PC-3 (cell line): ENCODE measurements at regions of chr14 and their contacts with region 1.

Region 1: GRCh38 chr14:65412032-65412846 is at the start of gene FUT8:
- DNase-seq: peak; percentile 98
- ATAC-seq: peak; percentile 82
- H3K4me3 ChIP-seq: peak within 1 kb of the TSS; percentile 86
- H3K27ac ChIP-seq: peak within 1 kb of the TSS; percentile 86
- H3K4me1 ChIP-seq: peaks cover 25% of the 10 kb centered on the region
- H3K27me3 ChIP-seq: no peaks in the 10 kb centered on the region
- CTCF ChIP-seq: peak; percentile 72
- total RNA-seq, gene FUT8: 129 and 132 TPM in 2 replicates

Region 2: GRCh38 chr14:65170768-65171507 is 241.3 kb before region 1 on chr14:
- CTCF ChIA-PET with region 1: interaction called, 6 read pairs
- POLR2A ChIA-PET with region 1: interaction called, 13 read pairs
- intact Hi-C with region 1: no loop called
- DNase-seq: peak; percentile 80
- ATAC-seq: peak; percentile 86
- H3K4me3 ChIP-seq: peak overlapping the region; percentile 65
- H3K27ac ChIP-seq: peak overlapping the region; percentile 56
- H3K4me1 ChIP-seq: peaks cover 18% of the 10 kb centered on the region
- H3K27me3 ChIP-seq: no peaks in the 10 kb centered on the region
- CTCF ChIP-seq: peak; percentile 76

Region 3: GRCh38 chr14:65302571-65303189 is 109.6 kb before region 1 on chr14:
- CTCF ChIA-PET with region 1: interaction called, 11 read pairs
- POLR2A ChIA-PET with region 1: interaction called, 15 read pairs
- intact Hi-C with region 1: loop called (anchors 1 kb)
- DNase-seq: peak; percentile 80
- ATAC-seq: peak; percentile 31
- H3K4me3 ChIP-seq: peak overlapping the region; percentile 18; the same call in 1 of the 2 replicates
- H3K27ac ChIP-seq: peak overlapping the region; percentile 94
- H3K4me1 ChIP-seq: peaks cover 58% of the 10 kb centered on the region
- H3K27me3 ChIP-seq: no peaks in the 10 kb centered on the region
- CTCF ChIP-seq: no peak

Region 4: GRCh38 chr14:65401763-65402162 is 10.5 kb before region 1 on chr14:
- CTCF ChIA-PET with region 1: interaction called, 10 read pairs
- POLR2A ChIA-PET with region 1: interaction called, 3 read pairs
- intact Hi-C with region 1: no loop called
- DNase-seq: no peak
- ATAC-seq: no peak
- H3K4me3 ChIP-seq: no peak overlapping the region
- H3K27ac ChIP-seq: no peak overlapping the region
- H3K4me1 ChIP-seq: peaks cover 5% of the 10 kb centered on the region
- H3K27me3 ChIP-seq: no peaks in the 10 kb centered on the region
- CTCF ChIP-seq: no peak

Region 5: GRCh38 chr14:65676361-65676998 is 264.2 kb after region 1 on chr14:
- CTCF ChIA-PET with region 1: no interaction called
- POLR2A ChIA-PET with region 1: no interaction called
- intact Hi-C with region 1: loop called (anchors 5 kb)
- DNase-seq: peak; percentile 41
- ATAC-seq: peak; percentile 80
- H3K4me3 ChIP-seq: peak overlapping the region; percentile 44
- H3K27ac ChIP-seq: peak overlapping the region; percentile 16; the same call in 1 of the 2 replicates
- H3K4me1 ChIP-seq: peaks cover 14% of the 10 kb centered on the region
- H3K27me3 ChIP-seq: no peaks in the 10 kb centered on the region
- CTCF ChIP-seq: no peak

Region 6: DNA sequence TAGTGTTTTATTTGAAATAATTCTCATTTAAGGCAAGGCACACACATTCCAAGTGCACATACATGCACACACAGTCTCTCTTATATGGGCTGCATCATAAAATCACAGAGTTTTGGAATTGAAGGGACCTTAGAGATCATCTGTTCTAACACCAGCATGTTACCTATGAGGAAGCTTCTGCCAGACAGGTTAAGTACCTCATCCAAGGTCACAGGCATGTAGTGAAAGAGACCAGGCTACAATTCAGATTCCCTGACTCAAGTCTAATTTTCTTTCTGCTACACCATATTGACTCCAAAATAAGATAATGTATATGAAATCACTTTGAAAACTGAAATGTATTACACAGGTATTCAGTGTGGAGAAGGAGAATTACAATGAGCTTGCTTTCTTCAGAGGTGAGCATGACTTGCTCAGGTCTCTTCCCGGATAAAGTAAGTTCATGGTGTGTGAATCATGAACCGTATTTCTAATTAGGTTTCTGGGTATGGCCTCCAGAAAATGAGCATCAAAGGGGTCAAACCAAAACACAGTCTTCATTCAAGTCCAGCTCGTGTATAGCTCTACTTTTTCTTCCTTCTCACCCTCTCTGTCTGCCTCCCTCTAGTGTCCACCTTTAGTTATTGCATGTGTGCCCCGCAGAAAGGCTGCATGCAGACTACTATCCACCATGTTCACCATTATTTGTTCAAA is 412.2 kb after region 1 on chr14:
- CTCF ChIA-PET with region 1: interaction called, 87 read pairs
- POLR2A ChIA-PET with region 1: interaction called, 5 read pairs
- intact Hi-C with region 1: loop called (anchors 1 kb)
- DNase-seq: peak; percentile 81
- ATAC-seq: peak; percentile 87
- H3K4me3 ChIP-seq: no peak overlapping the region
- H3K27ac ChIP-seq: no peak overlapping the region
- H3K4me1 ChIP-seq: no peaks in the 10 kb centered on the region
- H3K27me3 ChIP-seq: peaks cover 39% of the 10 kb centered on the region
- CTCF ChIP-seq: peak; percentile 97

Region 7: DNA sequence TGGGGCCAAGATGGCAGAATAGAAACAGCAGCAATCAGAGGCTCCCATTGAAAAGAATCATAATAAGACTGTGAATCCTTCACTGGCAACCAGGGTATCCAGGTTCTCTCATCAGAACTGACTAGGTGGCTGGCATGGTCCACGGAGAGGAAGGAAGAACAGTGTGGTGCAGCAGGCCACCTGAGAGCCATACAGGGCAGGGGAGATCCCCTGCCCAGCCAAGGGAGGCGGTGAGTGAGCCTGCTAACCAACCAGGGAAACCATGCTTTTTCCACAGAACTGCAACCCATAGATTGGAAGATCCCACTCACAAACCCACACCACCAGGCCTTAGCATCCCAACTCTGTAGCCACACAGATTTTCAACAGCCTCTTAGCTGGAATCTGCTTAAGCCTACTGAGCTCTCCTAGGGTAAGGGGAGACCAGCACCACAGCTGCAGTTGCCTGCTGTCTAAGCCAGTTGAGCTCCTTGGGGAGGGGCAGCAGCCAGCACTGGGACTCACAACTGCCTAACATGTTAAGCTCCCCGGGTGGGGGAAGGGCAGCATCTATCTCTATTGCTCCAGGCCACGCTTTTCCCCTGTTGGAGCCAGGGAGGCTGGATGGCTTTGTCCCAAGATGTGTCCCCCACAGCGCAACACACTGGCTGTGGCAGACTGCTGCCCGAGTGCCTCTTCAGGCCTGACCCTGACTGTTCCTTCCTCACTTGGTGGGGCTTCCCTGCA is 731.3 kb after region 1 on chr14:
- CTCF ChIA-PET with region 1: no interaction called
- POLR2A ChIA-PET with region 1: no interaction called
- intact Hi-C with region 1: no loop called
- DNase-seq: no peak
- ATAC-seq: no peak
- H3K4me3 ChIP-seq: no peak overlapping the region
- H3K27ac ChIP-seq: no peak overlapping the region
- H3K4me1 ChIP-seq: no peaks in the 10 kb centered on the region
- H3K27me3 ChIP-seq: peaks cover 31% of the 10 kb centered on the region
- CTCF ChIP-seq: no peak